ENCODE measurements at regions of chr6 and their contacts with region 1.

Region 1: DNA sequence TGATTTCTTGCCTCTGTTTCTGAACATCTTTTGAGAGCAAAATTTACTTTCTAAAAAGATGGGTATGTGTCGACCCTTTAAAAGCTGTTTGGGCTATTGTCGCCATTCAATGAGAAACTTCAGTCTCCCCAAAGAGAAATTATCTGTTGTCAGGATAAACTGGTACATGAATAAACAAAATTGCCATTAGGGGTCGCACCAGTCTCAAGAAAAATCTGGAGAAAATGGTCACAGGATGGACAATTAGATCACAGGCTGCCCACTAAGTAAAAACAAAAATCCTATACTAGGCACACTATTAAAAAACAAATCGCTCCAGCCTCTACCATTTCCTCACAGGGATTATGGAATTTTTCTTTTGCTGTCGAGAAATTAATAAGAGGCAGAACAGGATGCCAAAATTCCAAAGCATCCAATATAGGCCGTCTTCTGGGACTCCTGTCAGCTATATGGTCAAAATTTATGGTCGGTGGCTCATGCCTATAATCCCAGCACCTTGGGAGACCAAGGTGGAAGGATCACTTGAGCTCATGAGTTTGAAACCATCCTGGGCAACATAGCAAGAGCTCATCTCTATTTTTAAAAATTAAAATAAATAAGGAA is 5.5 kb upstream of the HLA-E start:
- DNase-seq: peak in 1 of 2 donors; percentile 68
- ATAC-seq: peak in 6 of 8 donors; percentile 37 to 67 (median 47)
- H3K4me3 ChIP-seq: no peak overlapping the region
- H3K27ac ChIP-seq: peak overlapping the region in 1 of 10 donors; percentile 26
- H3K4me1 ChIP-seq: peaks cover 0 to 28% (median 5%) of the 10 kb centered on the region in 9 donors
- H3K27me3 ChIP-seq: peaks cover 10 to 43% (median 39%) of the 10 kb centered on the region in 7 donors
- CTCF ChIP-seq: peak in 8 of 9 donors; percentile 37 to 73 (median 65)

Region 2: GRCh38 chr6:30541515-30542403 is 58.0 kb after region 1 on chr6:
- intact Hi-C with region 1: loop called in 6 of 10 experiments (anchors 1 to 5 kb)
- DNase-seq: peak; percentile 63 to 73
- ATAC-seq: peak; percentile 57 to 84 (median 78)
- H3K4me3 ChIP-seq: peak overlapping the region in 9 of 10 donors; percentile 14 to 52 (median 41)
- H3K27ac ChIP-seq: peak overlapping the region; percentile 13 to 71 (median 64)
- H3K4me1 ChIP-seq: peaks cover 3 to 27% (median 17%) of the 10 kb centered on the region in 9 donors
- H3K27me3 ChIP-seq: peaks cover 0 to 7% (median 0%) of the 10 kb centered on the region in 7 donors
- CTCF ChIP-seq: peak; percentile 93 to 99 (median 99)

Region 3: DNA sequence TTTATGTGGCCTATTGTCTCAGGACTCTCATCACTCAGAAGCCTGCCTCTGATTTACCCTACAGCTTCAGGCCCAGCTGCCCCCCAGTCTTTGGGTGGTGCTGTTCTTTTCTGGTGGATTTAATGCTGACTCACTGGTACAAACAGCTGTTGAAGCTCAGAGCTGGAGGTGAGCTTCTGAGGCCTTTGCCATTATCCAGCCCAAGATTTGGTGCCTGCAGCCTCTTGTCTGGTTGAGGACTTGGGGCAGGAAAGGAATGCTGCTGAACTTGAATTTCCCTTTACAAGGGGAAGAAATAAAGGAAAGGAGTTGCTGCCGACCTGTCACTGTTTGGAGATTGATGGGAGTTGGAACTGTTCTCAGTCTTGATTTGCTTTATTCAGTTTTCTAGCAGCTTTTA is 107.2 kb after region 1 on chr6:
- intact Hi-C with region 1: loop called in 9 of 10 experiments (anchors 2 to 10 kb)
- DNase-seq: no peak
- ATAC-seq: peak in 1 of 8 donors; percentile 34
- H3K4me3 ChIP-seq: no peak overlapping the region
- H3K27ac ChIP-seq: no peak overlapping the region
- H3K4me1 ChIP-seq: no peaks in the 10 kb centered on the region
- H3K27me3 ChIP-seq: no peaks in the 10 kb centered on the region
- CTCF ChIP-seq: no peak

Region 4: GRCh38 chr6:30672445-30673253 is 188.9 kb after region 1 on chr6 and contains the start of gene DHX16:
- intact Hi-C with region 1: loop called in 6 of 10 experiments (anchors 2 to 10 kb)
- DNase-seq: peak; percentile 94 to 98
- ATAC-seq: peak; percentile 86 to 95 (median 91)
- H3K4me3 ChIP-seq: peak within 1 kb of the TSS; percentile 70 to 99 (median 89)
- H3K27ac ChIP-seq: peak within 1 kb of the TSS in 9 of 10 donors; percentile 57 to 91 (median 79)
- H3K4me1 ChIP-seq: peaks cover 0 to 30% (median 18%) of the 10 kb centered on the region in 9 donors
- H3K27me3 ChIP-seq: no peaks in the 10 kb centered on the region
- CTCF ChIP-seq: peak; percentile 79 to 93 (median 87)
- total RNA-seq, gene DHX16: 15.9 to 22.9 (median 20.9) TPM